OCI-LY7 (cell line): ENCODE measurements at regions of chr16 and their contacts with region 1.

Region 1: GRCh38 chr16:48623304-48624016 is 13.5 kb upstream of the N4BP1 start:
- DNase-seq: peak; percentile 73
- H3K4me3 ChIP-seq: peak overlapping the region; percentile 46
- H3K27ac ChIP-seq: no peak overlapping the region
- H3K4me1 ChIP-seq: peaks cover 8% of the 10 kb centered on the region
- CTCF ChIP-seq: peak; percentile 94

Region 2: GRCh38 chr16:48231727-48232492 is 391.6 kb before region 1 on chr16:
- CTCF ChIA-PET with region 1: no interaction called
- POLR2A ChIA-PET with region 1: no interaction called
- intact Hi-C with region 1: loop called (anchors 2 kb)
- DNase-seq: peak; percentile 19
- H3K4me3 ChIP-seq: no peak overlapping the region
- H3K27ac ChIP-seq: no peak overlapping the region
- H3K4me1 ChIP-seq: no peaks in the 10 kb centered on the region
- CTCF ChIP-seq: peak; percentile 64

Region 3: DNA sequence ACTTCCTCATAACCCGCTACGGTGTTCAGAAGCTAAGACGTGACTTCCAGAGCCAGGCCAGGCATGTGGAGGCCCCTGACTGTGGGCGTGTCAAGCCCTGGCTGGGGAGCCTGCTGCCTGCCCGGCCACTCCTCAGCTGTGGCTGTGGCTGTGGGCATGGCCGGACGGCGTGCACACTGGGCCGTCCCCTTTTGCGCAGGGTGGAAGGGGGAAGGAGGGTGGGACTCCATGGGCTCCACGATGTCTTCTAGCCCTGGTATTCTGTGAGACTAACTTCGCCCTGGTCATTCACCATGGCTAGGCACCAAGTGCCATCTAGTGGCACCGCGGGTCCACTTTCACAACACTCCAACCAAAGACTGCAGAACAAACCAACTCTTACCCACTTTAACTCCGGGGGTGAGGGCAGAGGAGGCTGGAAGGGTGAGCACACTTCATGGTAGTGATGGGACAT is 81.4 kb before region 1 on chr16:
- CTCF ChIA-PET with region 1: no interaction called
- POLR2A ChIA-PET with region 1: no interaction called
- intact Hi-C with region 1: loop called (anchors 5 kb)
- DNase-seq: peak; percentile 38
- H3K4me3 ChIP-seq: no peak overlapping the region
- H3K27ac ChIP-seq: no peak overlapping the region
- H3K4me1 ChIP-seq: no peaks in the 10 kb centered on the region
- CTCF ChIP-seq: peak; percentile 68

Region 4: GRCh38 chr16:48790151-48790550 is 166.7 kb after region 1 on chr16:
- CTCF ChIA-PET with region 1: no interaction called
- POLR2A ChIA-PET with region 1: no interaction called
- intact Hi-C with region 1: no loop called
- DNase-seq: no peak
- H3K4me3 ChIP-seq: no peak overlapping the region
- H3K27ac ChIP-seq: no peak overlapping the region
- H3K4me1 ChIP-seq: no peaks in the 10 kb centered on the region
- CTCF ChIP-seq: no peak